Sigmoid colon (tissue), 7 donors: ENCODE measurements at regions of chr1 and their contacts with region 1.

Region 1: GRCh38 chr1:184827600-184828368 is 73.1 kb upstream of the EDEM3 start:
- DNase-seq: no peak
- H3K4me3 ChIP-seq: no peak overlapping the region
- H3K27ac ChIP-seq: peak overlapping the region; percentile 72 to 86 (median 82)
- H3K4me1 ChIP-seq: peaks cover 0 to 69% (median 62%) of the 10 kb centered on the region in 4 donors
- H3K27me3 ChIP-seq: no peaks in the 10 kb centered on the region
- CTCF ChIP-seq: no peak
- EP300 ChIP-seq: no peak
- POLR2A ChIP-seq: no peak

Region 2: GRCh38 chr1:184792450-184792969 is 35.3 kb before region 1 on chr1:
- intact Hi-C with region 1: no loop called
- DNase-seq: peak; percentile 94
- H3K4me3 ChIP-seq: no peak overlapping the region
- H3K27ac ChIP-seq: peak overlapping the region; percentile 66 to 79 (median 69)
- H3K4me1 ChIP-seq: peaks cover 0 to 29% (median 23%) of the 10 kb centered on the region in 4 donors
- H3K27me3 ChIP-seq: no peaks in the 10 kb centered on the region
- CTCF ChIP-seq: no peak
- EP300 ChIP-seq: peak in 2 of 4 donors; percentile 25 to 29
- POLR2A ChIP-seq: no peak

Region 3: DNA sequence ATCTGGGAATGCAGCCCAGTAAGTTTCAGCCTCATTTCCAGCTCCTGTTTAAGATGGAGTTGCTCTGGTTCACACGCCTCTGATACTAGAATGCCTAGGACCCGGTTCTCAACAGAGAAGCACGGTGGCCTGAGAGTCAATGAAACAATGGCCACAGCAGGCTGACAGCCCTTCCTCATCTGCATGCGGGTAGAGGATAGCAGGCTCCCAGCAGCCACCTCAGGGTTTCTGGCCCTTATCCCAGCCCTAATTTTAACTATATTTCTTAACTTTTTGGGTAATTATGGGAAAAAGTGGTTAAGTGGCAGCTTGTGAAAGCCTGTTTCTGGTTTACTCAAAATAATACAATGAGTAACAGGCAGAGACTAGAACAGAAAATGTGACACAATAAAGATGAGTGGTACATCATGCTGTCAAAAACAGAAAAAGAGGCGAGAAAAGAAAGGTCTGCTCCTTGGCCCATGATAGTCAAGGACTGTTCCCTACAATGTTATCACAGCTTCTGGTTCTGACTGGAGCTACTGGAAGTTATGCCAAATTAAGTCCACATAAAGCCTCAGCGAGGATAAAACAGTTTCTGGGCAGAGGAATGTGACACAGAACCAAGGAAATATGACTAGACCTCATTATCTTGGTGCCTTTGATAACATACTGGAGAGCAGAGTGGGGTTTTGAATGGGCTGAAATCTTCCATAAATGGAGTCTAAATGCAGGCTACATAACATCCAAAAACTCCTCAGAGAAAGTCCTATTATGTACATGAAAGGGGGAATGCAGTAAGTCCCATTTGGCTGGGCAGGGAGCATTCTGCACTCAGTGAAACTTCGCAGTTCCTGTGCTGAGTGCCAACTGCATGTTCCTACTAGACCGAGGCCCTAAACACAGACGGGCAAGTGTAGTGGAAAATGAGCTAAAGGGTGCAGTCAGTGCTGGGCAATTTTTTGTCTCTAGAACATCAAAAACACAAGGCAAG is 54.4 kb after region 1 on chr1:
- intact Hi-C with region 1: loop called (anchors 10 kb)
- DNase-seq: peak; percentile 87
- H3K4me3 ChIP-seq: no peak overlapping the region
- H3K27ac ChIP-seq: peak overlapping the region; percentile 80 to 92 (median 84)
- H3K4me1 ChIP-seq: peaks cover 0 to 100% (median 88%) of the 10 kb centered on the region in 4 donors
- H3K27me3 ChIP-seq: no peaks in the 10 kb centered on the region
- CTCF ChIP-seq: no peak
- EP300 ChIP-seq: peak in 2 of 4 donors; percentile 57 to 79
- POLR2A ChIP-seq: no peak